ENCODE measurements at regions of chr5 and their contacts with region 1.

Region 1: DNA sequence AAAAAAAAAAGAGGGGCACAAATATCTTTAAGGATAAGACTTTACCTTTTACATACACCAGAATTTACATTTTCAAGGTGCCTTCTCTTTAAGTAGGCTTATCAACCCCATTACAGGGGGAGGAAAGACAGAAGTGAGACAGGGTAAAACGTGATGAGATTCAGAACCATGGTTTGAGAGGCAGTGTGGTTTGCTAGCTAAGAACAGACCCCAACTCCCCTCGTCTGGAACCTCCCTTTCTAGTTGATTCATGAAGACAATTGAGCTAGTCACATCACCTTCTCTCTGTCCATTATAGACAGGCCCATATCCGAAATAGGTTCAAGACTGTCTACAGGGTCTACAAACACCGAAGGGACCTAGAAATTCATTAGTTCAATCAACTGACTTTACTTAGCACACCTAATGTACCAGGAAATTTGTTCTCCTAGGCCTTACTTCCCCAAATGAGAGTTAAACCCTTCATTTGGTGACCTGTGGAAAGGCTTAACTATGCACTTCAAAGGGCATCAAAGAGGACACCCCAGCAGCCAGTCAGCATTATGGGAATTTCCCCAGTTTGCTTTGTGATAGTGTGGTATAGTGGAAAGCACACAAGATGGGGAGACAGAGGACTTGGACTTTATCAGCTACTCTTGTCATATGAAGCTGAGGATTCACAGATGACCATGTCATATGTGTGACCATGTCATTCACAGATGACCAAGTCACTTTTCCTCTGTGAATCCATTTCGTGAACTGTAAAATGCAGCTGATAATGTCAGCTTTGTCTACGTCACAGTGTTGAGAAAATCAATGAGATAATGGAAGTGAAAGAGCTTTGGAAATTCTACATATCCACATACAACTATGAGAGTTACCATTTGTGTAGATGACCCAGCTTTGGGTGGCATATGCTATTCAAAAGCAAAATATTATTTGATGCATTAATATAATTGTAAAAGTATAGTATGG is 40.2 kb upstream of the CYFIP2 start:
- DNase-seq: peak; percentile 65
- H3K4me3 Mint-ChIP-seq: peak overlapping the region; percentile 93
- H3K27ac Mint-ChIP-seq: peak overlapping the region; percentile 100
- H3K4me1 Mint-ChIP-seq: peaks cover 67% of the 10 kb centered on the region
- H3K27me3 Mint-ChIP-seq: no peaks in the 10 kb centered on the region

Region 2: GRCh38 chr5:157160001-157160400 is 65.7 kb before region 1 on chr5:
- CTCF ChIA-PET with region 1: no interaction called
- intact Hi-C with region 1: no loop called
- DNase-seq: peak; percentile 72
- H3K4me3 Mint-ChIP-seq: peak overlapping the region; percentile 22
- H3K27ac Mint-ChIP-seq: peak overlapping the region; percentile 93
- H3K4me1 Mint-ChIP-seq: peaks cover 74% of the 10 kb centered on the region
- H3K27me3 Mint-ChIP-seq: no peaks in the 10 kb centered on the region

Region 3: GRCh38 chr5:157198277-157198986 is 27.3 kb before region 1 on chr5:
- CTCF ChIA-PET with region 1: interaction called, 10 read pairs
- intact Hi-C with region 1: loop called (anchors 1 kb)
- DNase-seq: peak; percentile 80
- H3K4me3 Mint-ChIP-seq: peak overlapping the region; percentile 48
- H3K27ac Mint-ChIP-seq: peak overlapping the region; percentile 100
- H3K4me1 Mint-ChIP-seq: peaks cover 93% of the 10 kb centered on the region
- H3K27me3 Mint-ChIP-seq: no peaks in the 10 kb centered on the region

Measured in activated naive CD4-positive, alpha-beta T cell treated with anti-CD3 and anti-CD28 coated beads for 36 hours (primary cell).